Dorsolateral prefrontal cortex (tissue), 120 donors: ENCODE measurements at regions of chr21 and their contacts with region 1.

Region 1: GRCh38 chr21:45363921-45364467 is 41.0 kb upstream of the COL18A1 start:
- DNase-seq: peak in 8 of 10 donors; percentile 55 to 82 (median 68)
- H3K4me3 ChIP-seq: peak overlapping the region in 22 of 59 donors; percentile 2 to 54 (median 22)
- H3K27ac ChIP-seq: peak overlapping the region in 54 of 59 donors; percentile 16 to 89 (median 73)
- H3K27me3 ChIP-seq: no peaks in the 10 kb centered on the region
- CTCF ChIP-seq: peak in 3 of 56 donors; percentile 16 to 23 (median 19)

Region 2: DNA sequence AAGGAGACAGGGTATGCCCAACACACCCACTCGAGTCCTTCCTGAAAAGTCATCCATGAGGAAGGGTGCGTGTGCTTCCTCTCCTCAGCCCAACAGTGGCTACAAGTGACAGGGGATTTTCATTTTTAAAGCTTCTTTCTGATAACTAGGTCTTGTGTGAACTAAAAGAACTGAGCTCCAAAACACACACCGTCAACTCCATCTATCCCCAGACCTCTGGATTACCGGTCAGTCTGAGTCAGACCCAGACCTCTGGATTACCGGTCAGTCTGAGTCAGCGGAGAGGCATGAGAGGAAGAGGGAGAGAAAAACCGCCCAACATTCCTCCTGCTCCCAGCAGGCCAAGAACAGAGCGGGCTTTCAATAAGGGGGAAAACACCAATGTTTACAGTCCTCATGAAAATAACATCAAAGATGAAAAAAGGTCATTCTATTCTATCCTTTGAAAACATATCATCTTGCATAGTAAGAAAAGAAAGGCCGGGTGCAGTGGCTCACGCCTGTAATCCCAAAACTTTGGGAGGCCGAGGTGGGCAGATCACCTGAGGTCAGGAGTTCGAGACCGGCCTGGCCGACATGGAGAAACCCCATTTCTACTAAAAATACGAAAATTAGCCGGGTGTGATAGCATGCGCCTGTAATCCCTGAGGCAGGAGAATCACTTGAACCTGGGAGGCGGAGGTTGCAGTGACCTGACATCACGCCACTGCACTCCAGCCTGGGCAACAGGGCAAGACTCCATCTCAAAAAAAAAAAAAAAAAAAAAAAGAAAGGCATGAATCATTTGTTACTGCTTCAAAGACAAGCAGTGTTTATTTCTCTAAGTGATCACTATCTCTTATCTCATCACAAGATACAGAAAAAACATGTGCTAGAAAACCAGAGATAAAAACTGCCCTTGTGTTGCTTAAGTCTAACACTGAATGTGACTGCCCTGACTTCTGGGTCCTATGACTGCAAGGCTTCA is 493.9 kb before region 1 on chr21:
- intact Hi-C with region 1: no loop called
- DNase-seq: no peak
- H3K4me3 ChIP-seq: peak overlapping the region in 18 of 59 donors; percentile 2 to 94 (median 80)
- H3K27ac ChIP-seq: peak overlapping the region in 47 of 59 donors; percentile 1 to 94 (median 65)
- H3K27me3 ChIP-seq: no peaks in the 10 kb centered on the region
- CTCF ChIP-seq: no peak

Region 3: DNA sequence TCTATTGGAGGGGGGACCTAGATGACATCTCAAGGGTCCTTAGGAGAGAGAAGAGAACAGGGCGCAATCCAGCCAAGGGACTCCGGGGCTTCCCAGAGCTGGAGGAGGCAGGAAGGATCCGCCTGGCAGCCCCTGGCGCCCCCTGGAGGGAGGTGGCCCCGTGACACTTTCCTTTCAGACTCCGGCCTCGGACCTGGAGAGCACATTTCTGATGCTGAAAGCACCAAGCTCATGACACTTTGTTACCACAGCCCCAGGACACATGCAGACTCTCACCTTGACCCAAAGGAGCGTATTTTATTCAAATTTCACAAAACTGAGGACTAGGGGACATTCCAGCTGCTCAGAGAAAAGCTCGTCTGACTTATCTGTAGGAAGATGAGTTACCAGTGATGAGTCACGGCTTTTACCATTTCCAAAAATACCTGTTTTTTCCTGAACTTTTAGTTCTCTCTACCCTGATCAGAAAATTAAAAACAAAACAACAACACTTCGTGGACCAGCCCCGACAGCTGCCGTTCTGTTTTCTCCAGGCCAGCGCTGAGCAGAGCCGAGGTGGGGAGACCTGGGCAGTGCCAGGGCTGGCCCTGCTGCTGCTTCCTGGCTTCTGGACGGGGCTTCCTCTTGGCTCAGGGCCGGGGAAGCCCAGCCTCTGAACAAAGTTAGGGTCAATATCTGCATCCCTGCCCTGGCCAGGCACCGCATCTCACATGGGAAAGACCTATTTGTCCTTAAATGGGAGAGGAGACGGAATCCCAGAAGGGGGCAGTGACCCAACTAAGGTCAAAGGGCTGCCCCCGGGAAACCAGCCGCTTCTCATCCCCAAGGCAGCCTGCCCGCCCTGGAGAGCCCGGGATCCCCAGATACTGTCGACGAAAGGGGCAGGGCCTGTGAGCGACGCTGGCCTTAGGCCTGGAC is 54.7 kb before region 1 on chr21:
- intact Hi-C with region 1: loop called in 1 of 2 experiments (anchors 2 kb)
- DNase-seq: peak in 6 of 10 donors; percentile 33 to 62 (median 46)
- H3K4me3 ChIP-seq: no peak overlapping the region
- H3K27ac ChIP-seq: peak overlapping the region in 35 of 59 donors; percentile 9 to 75 (median 37)
- H3K27me3 ChIP-seq: peaks cover 0 to 4% (median 0%) of the 10 kb centered on the region in 45 donors
- CTCF ChIP-seq: peak in 55 of 56 donors; percentile 20 to 68 (median 51)

Region 4: DNA sequence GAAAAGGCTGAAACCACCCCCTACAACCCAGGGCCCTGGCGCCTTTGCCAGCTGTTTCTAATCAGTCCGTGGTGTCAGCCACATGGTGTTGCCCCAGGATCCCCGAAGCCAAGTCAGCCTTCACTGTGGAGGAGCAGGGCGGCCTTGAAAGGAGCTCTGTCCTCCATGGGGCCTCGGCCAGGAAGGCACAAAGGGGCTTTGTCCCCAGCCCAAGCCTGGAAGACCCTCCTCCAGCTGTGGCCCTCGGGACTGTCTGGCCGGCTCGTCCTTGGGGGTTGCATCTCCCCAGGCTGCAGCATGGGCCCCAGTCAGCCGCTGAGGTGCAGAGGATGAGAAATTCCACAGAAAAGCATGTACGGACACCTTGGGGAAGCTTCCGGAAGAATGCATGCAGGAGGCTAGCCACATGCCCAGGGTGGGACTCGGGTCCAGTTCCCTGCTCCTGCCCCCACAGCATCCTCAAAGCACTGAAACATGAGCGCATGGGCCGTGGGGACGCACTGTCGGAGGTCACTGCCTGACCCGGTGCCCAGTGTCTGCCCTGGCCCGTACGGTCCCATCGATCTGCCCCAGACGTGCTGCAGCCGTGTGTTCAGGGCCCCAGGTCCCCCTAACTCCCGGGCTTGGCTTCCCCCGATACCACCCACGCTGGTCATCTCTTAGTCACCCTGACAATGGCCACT is 37.7 kb before region 1 on chr21:
- intact Hi-C with region 1: loop called in 1 of 2 experiments (anchors 5 kb)
- DNase-seq: peak in 9 of 10 donors; percentile 50 to 70 (median 65)
- H3K4me3 ChIP-seq: no peak overlapping the region
- H3K27ac ChIP-seq: no peak overlapping the region
- H3K27me3 ChIP-seq: peaks cover 0 to 18% (median 0%) of the 10 kb centered on the region in 45 donors
- CTCF ChIP-seq: no peak